H1 (cell line): ENCODE measurements at regions of chr2 and their contacts with region 1.

Region 1: DNA sequence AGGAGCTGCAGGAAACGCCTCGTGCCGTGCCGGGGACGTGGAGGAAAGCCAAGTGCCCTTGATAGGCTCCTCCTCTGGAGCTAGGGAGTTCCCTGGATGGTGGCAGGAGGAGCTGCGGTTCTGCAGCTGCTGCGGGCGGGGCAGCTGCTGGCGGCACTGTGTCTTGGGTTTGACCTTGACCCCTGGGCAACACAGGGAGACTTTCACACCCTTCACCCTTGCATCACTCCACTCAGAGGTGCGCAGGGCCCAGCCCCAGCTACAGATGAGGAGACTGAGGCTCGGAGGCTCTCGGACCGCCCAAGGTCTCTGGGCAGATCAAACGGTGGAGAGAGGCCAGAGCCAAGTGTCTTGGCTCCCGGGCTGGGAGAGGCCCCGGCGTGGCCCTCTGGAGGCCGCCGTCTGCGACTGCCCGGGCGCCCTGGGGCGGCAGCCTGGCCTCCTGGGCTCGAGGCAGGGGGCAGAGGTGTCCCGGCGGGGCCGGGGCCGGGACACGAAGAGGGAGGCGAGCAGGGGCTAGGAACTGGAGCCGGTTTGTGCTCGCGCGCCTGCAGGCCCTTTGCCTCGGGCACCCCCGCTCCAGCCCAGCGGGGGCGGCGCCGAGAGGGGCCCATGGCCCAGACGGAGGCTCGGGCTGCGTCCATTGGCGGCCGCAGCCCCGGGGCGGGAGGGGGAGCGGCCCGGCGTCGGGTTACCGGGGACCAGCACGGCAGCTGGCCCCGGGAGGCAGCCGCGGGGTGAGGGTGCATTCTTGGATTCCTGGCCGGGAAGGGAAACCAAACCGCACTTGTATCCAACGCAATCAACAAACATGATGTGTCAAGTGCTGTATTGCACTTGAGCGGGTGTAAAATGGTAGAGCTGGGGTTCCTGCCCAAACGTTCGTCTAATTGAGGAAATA is 129.6 kb upstream of the SLC1A4 start:
- DNase-seq: peak in 1 of 2 experiments; percentile 68
- H3K4me3 ChIP-seq: peak overlapping the region; percentile 17 to 61 (median 44)
- H3K27ac ChIP-seq: no peak overlapping the region
- H3K4me1 ChIP-seq: peaks cover 5 to 30% (median 18%) of the 10 kb centered on the region in 4 experiments
- H3K27me3 ChIP-seq: peaks cover 1 to 52% (median 38%) of the 10 kb centered on the region in 4 experiments
- CTCF ChIP-seq: no peak; a peak in 1 of 4 replicates
- EP300 ChIP-seq: no peak
- POLR2A ChIP-seq: no peak
- RAD21 ChIP-seq: no peak; a peak in 1 of 4 replicates

Region 2: GRCh38 chr2:64711252-64711800 is 148.2 kb before region 1 on chr2:
- CTCF ChIA-PET with region 1: no interaction called
- POLR2A ChIA-PET with region 1: no interaction called
- DNase-seq: no peak
- H3K4me3 ChIP-seq: no peak overlapping the region
- H3K27ac ChIP-seq: no peak overlapping the region
- H3K4me1 ChIP-seq: no peaks in the 10 kb centered on the region
- H3K27me3 ChIP-seq: no peaks in the 10 kb centered on the region; a peak in 1 of 7 replicates
- CTCF ChIP-seq: no peak
- EP300 ChIP-seq: no peak
- POLR2A ChIP-seq: no peak
- RAD21 ChIP-seq: no peak

Region 3: DNA sequence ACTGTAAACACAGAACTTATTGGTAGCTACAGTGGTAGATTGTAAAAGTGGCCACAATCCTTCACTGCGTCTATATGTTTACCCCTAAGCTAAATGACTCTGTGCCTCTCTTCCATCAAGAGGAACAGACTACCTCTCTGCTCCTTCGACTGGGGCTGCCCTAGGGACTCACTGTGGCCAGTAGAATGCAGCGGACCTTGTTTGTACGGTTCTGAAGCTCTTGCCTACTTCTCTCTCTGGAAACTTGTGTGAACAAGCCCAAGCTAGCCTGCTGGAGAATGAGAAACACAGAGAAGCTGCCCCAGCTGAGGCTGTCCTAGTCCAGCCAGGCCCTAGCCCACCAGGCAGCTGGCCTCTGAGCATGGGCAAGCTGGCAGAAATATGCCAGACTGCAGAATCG is 11.2 kb before region 1 on chr2:
- CTCF ChIA-PET with region 1: interaction called, 15 read pairs
- POLR2A ChIA-PET with region 1: interaction called, 3 read pairs
- DNase-seq: no peak
- H3K4me3 ChIP-seq: no peak overlapping the region
- H3K27ac ChIP-seq: no peak overlapping the region
- H3K4me1 ChIP-seq: peaks cover 0 to 4% (median 1%) of the 10 kb centered on the region in 4 experiments; a peak in 1 of 7 replicates
- H3K27me3 ChIP-seq: peaks cover 0 to 2% (median 0%) of the 10 kb centered on the region in 4 experiments; a peak in 1 of 7 replicates
- CTCF ChIP-seq: no peak
- EP300 ChIP-seq: no peak
- POLR2A ChIP-seq: no peak
- RAD21 ChIP-seq: no peak